Activated T-helper 2 cell treated with anti-CD3 and anti-CD28 coated beads, Interferon-gamma antibody, Interleukin-2, Interleukin-4, amounts not matched to agents 10 μg/mL and 5 μg/mL and 100 μg/mL, durations not matched to agents 14 hours and 24 hours and 36 hours (primary cell): ENCODE measurements at regions of chr9 and their contacts with region 1.

Region 1: GRCh38 chr9:86282077-86282978 is at the start of gene ISCA1:
- DNase-seq: peak; percentile 92
- H3K4me3 Mint-ChIP-seq: peak within 1 kb of the TSS; percentile 95
- H3K27ac Mint-ChIP-seq: peak within 1 kb of the TSS; percentile 99
- H3K4me1 Mint-ChIP-seq: peaks cover 36% of the 10 kb centered on the region
- H3K27me3 Mint-ChIP-seq: no peaks in the 10 kb centered on the region
- total RNA-seq, gene ISCA1: 28.5 and 28.9 TPM in 2 replicates

Region 2: GRCh38 chr9:85940832-85941621 is 341.3 kb before region 1 on chr9 and contains the start of gene NAA35:
- intact Hi-C with region 1: loop called (anchors 1 kb)
- DNase-seq: peak; percentile 99
- H3K4me3 Mint-ChIP-seq: no peak within 1 kb of the TSS
- H3K27ac Mint-ChIP-seq: peak within 1 kb of the TSS; percentile 93
- H3K4me1 Mint-ChIP-seq: peaks cover 7% of the 10 kb centered on the region
- H3K27me3 Mint-ChIP-seq: no peaks in the 10 kb centered on the region
- total RNA-seq, gene NAA35: 31.3 and 33.6 TPM in 2 replicates

Region 3: GRCh38 chr9:86230858-86231257 is 51.5 kb before region 1 on chr9:
- intact Hi-C with region 1: no loop called
- DNase-seq: no peak
- H3K4me3 Mint-ChIP-seq: no peak overlapping the region
- H3K27ac Mint-ChIP-seq: no peak overlapping the region
- H3K4me1 Mint-ChIP-seq: peaks cover 3% of the 10 kb centered on the region
- H3K27me3 Mint-ChIP-seq: peaks cover 5% of the 10 kb centered on the region

Region 4: DNA sequence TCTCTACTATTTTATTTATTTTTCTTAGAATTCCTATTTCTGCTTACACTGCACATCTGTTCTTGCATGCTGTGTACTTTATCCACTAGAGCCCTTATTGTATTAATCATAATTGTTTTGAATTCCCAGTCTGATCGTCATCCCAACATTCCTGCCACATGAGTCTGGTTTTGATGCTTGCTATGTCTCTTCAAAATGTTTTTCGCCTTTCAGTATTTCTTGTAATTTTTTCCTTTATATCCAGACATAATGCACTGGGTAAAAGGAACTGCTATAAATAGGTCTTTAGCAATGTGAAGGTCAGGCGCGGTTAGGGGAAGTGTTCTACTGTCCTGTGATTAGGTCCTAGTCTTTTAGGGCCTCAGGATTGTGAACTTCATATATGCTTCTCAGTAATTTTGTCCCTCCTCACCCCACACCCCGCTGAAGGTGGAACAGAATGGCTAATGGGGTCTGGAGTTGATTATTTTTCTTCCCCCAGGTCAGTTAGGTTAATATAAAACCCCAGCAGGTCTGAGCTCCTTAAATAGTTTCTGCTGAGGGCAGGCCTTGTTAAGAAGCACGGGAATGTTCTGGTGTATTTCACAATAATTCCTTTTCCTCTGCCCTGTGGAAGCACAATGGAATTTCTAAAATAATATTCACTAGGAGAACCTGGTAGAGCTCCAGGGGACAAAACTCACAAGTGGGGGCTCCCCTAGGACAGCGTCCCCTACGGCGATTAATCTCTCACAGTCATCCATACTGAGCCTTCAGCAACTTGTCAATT is 218.5 kb after region 1 on chr9:
- intact Hi-C with region 1: no loop called
- DNase-seq: no peak
- H3K4me3 Mint-ChIP-seq: no peak overlapping the region
- H3K27ac Mint-ChIP-seq: no peak overlapping the region
- H3K4me1 Mint-ChIP-seq: no peaks in the 10 kb centered on the region
- H3K27me3 Mint-ChIP-seq: peaks cover 10% of the 10 kb centered on the region